Activated naive CD8-positive, alpha-beta T cell treated with anti-CD3 and anti-CD28 coated beads, Interleukin-2, amount 10 ng/mL, durations not matched to agents 7 days and 5 days (primary cell): ENCODE measurements at regions of chr19 and their contacts with region 1.

Region 1: GRCh38 chr19:16076154-16076957 is at the start of gene TPM4:
- DNase-seq: peak; percentile 93
- ATAC-seq: peak; percentile 63
- H3K4me3 Mint-ChIP-seq: peak within 1 kb of the TSS; percentile 89
- H3K27ac Mint-ChIP-seq: peak within 1 kb of the TSS; percentile 93
- H3K4me1 Mint-ChIP-seq: peaks cover 61% of the 10 kb centered on the region
- H3K27me3 Mint-ChIP-seq: no peaks in the 10 kb centered on the region
- total RNA-seq, gene TPM4: 278 to 282 TPM

Region 2: GRCh38 chr19:16062789-16063188 is 13.6 kb before region 1 on chr19:
- POLR2A ChIA-PET with region 1: interaction called, 26 read pairs
- DNase-seq: peak; percentile 76
- ATAC-seq: no peak
- H3K4me3 Mint-ChIP-seq: peak overlapping the region; percentile 35
- H3K27ac Mint-ChIP-seq: no peak overlapping the region
- H3K4me1 Mint-ChIP-seq: peaks cover 22% of the 10 kb centered on the region
- H3K27me3 Mint-ChIP-seq: peaks cover 13% of the 10 kb centered on the region

Region 3: DNA sequence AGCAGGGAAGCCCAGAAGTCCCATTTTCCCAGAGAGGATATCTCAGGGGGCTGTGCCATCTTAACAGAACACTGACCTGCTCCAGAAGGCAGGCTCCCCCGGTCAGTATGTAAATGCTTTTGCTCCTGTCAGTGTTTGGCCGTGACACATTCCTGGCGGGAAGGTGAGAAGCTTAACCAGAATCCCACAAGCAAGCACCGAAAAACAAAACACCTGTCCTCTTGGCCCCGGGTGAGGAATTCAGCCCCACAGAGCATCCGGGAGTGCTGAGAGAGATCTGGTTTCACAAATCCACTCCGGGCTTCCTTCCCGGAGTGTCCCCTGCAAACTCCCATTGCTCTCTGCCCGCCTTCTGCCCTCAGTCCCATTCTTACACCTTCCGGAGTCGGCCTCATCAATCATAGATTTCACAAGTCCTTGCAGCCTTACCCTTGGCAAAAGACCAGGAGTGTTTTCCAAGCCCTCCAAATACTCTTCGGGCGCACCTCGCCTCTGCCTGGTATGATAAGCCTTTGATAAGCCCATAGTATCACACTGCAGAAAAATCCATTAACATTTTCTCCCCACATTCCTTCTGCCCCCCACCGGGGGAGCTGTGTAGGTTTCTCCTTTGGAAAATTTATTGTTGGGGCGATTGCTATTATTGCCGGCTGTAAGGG is 12.1 kb after region 1 on chr19:
- POLR2A ChIA-PET with region 1: interaction called, 100 read pairs
- DNase-seq: no peak
- ATAC-seq: no peak
- H3K4me3 Mint-ChIP-seq: no peak overlapping the region
- H3K27ac Mint-ChIP-seq: peak overlapping the region; percentile 67
- H3K4me1 Mint-ChIP-seq: peaks cover 47% of the 10 kb centered on the region
- H3K27me3 Mint-ChIP-seq: no peaks in the 10 kb centered on the region